HEK293 (cell line): ENCODE measurements at regions of chr15 and their contacts with region 1.

Region 1: DNA sequence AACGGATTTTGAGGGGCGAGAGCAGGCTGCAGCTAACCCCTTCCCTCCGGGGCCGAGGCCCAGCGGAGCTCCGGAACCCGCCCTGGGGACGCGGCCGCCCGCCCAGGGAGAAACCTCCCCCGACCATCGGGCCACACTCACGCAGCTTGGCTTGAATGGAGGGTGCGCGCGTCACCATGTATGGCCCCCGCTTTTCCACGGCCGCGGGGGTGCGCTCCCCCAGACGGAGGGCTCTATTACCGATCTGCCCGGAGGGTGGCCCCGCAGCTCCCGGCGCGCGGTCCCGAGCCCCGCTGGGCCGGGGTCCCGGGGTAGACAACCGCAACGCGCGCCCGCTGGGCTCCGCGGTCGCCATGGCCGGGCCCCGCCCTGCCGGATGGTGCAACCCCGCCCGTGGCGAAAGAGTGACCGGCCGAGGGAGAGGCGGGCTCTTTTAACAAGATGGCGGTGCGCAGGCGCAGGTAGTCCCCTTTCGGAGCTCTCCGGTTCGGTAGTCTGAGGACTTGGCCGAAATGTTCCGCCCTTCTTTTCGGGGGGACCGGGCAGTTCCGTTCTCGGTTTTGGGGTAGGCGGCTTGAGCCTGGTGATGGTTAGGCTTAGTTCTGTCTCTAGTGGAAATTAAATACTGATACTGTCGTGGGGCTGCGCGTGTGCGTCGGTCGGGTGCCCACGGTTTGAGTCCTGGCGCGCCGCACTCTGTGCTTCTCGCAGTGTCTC is at the start of gene FAM219B:
- H3K4me3 ChIP-seq: peak within 1 kb of the TSS; percentile 82
- H3K27ac ChIP-seq: peak within 1 kb of the TSS; percentile 89
- H3K4me1 ChIP-seq: peaks cover 3% of the 10 kb centered on the region; the same call in 1 of the 2 replicates
- CTCF ChIP-seq: peak; percentile 60

Region 2: DNA sequence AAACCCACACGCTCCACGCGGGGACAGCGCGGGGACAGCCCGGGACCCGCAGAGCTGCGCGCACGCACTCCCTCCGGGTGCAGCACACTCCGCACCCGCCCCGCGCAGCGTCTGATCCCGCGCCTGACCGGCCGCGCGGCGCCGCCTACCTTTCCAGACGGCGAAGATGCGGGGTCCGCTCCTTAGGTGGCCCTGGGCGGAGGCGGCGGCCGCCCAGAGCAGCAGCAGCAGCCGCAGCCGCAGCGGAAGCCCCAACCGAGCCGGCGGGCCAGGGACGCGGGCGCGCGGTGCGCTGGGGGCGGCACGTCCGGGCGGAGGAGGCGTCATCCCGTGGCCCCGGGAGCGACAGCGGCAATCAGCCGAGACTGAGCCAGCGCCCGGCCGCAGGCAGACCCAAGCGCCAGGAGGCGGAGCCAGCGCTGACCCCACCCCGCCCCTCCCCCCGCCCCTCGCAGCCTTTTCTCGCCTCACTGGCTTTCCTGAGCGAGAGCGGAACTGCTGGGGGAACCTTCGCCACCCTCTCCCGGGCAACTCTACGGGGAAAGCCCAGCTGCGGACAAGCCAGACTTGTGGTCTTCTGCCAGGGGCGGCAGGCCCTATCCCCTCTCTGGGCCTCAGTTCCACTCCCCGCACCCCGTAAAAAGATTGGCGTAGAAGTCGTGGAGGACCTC is 472.9 kb before region 1 on chr15 and contains the start of gene SEMA7A:
- CTCF ChIA-PET with region 1: no interaction called
- POLR2A ChIA-PET with region 1: no interaction called
- H3K4me3 ChIP-seq: peak within 1 kb of the TSS; percentile 57
- H3K27ac ChIP-seq: no peak within 1 kb of the TSS
- H3K4me1 ChIP-seq: peaks cover 4% of the 10 kb centered on the region
- CTCF ChIP-seq: no peak; the same call in 1 of the 2 replicates

Region 3: DNA sequence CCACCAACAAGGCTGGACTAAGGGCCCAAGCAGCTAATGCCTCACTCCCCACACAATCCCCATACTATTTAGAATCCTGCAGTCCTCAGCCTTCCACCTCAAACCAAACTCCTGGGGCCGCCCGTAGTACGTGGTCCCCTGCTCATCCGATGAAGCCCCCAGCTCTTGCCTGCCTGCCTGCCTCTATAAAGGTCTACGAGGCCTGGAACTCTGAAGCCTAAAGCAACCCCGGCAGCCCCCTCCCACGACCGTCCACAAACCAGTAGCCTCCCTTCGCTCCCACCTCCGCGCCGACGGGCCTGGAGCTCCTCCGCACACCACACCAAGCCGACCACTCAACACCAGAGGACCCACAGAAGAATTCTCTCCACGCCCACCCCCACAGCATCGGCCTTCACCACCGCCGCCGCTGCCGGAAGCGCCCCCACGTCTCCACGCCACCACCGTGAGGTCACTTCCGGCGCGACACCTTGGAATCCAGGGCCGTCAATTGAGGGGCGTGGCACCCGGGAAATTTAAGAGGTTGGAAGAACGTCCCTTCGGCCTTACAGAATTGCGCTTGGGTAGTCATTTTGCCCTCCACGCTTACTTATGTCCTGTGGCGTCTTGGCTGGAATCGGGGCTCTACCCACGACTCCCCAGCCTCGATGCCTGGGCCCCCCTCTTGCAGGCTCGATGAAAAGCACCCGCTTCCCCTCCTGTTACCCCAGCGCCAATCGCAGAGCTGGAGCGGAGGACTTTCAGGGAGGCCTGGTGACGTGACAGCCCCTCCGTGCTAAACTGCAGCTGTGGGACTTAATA is 210.8 kb before region 1 on chr15 and contains the start of gene EDC3:
- CTCF ChIA-PET with region 1: no interaction called
- POLR2A ChIA-PET with region 1: no interaction called
- H3K4me3 ChIP-seq: peak within 1 kb of the TSS; percentile 85
- H3K27ac ChIP-seq: peak within 1 kb of the TSS; percentile 76
- H3K4me1 ChIP-seq: peaks cover 5% of the 10 kb centered on the region; the same call in 1 of the 2 replicates
- CTCF ChIP-seq: no peak; the same call in 1 of the 2 replicates

Region 4: GRCh38 chr15:74752491-74753020 is 154.0 kb before region 1 on chr15:
- CTCF ChIA-PET with region 1: no interaction called
- POLR2A ChIA-PET with region 1: no interaction called
- H3K4me3 ChIP-seq: no peak overlapping the region
- H3K27ac ChIP-seq: no peak overlapping the region
- H3K4me1 ChIP-seq: no peaks in the 10 kb centered on the region
- CTCF ChIP-seq: no peak

Region 5: GRCh38 chr15:74781431-74782258 is 125.0 kb before region 1 on chr15 and contains the start of gene CSK:
- CTCF ChIA-PET with region 1: interaction called, 13 read pairs
- POLR2A ChIA-PET with region 1: interaction called, 4 read pairs
- H3K4me3 ChIP-seq: peak within 1 kb of the TSS; percentile 60
- H3K27ac ChIP-seq: peak within 1 kb of the TSS; percentile 95
- H3K4me1 ChIP-seq: peaks cover 27% of the 10 kb centered on the region
- CTCF ChIP-seq: no peak

Region 6: DNA sequence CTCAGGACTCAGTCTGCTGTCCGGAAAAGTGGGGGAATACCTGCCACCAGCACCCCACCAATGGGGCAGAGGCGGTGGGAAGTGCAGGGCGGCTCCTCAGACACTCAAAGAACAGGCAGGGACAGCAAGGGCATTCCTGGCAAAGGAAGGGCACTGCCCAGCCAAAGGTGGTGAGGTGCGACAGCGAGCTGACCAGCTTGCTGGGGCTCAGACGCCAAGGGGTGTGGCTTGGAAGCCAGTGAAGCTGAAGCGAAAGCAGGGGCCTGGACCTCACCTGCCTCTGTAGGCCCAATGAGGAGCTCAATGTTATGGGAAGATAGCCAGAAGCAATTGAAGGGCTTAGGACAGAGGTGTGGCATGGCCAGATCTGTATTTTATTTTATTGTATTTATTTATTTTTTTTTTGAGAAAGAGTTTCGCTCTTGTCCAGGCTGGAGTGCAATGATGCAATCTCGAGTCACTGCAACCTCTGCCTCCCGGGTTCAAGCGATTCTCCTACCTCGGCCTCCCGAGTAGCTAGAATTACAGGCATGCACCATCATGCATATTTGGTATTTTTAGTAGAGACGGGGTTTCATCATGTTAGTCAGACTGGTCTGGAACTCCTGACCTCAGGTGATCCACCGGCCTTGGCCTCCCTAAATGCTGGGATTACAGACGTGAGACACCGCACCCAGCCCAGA is 98.4 kb before region 1 on chr15:
- CTCF ChIA-PET with region 1: interaction called, 11 read pairs
- POLR2A ChIA-PET with region 1: no interaction called
- H3K4me3 ChIP-seq: no peak overlapping the region
- H3K27ac ChIP-seq: no peak overlapping the region
- H3K4me1 ChIP-seq: no peaks in the 10 kb centered on the region
- CTCF ChIP-seq: no peak

Region 7: DNA sequence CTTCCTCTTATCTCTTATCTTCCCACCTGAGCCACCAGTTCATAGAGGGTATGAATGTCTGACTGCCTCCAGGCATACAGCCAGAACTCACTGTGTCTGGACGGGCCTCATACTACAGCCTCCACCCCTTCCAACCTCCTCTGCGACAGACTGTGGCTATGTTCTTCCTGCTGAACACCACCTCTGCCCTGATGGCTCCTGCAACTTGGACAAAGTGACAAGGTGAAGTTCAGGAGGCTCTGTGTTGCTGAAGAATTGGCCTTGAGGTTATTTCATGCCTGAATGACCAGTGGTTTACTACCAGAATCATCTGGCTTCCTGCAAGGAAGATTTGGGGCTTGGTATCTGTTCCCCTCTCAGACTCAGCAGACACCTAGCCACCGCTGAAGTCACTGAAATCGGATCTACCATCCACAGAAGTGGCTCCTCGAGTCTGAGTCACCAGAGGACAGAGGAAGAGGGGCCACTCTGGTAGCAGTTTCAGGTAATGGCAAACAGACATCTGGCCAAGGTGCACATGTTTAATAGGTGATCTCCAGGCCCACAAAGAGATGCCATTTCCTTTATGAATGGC is 49.4 kb before region 1 on chr15:
- CTCF ChIA-PET with region 1: interaction called, 10 read pairs
- POLR2A ChIA-PET with region 1: interaction called, 5 read pairs
- H3K4me3 ChIP-seq: no peak overlapping the region
- H3K27ac ChIP-seq: peak overlapping the region; percentile 42
- H3K4me1 ChIP-seq: peaks cover 14% of the 10 kb centered on the region
- CTCF ChIP-seq: no peak

Region 8: DNA sequence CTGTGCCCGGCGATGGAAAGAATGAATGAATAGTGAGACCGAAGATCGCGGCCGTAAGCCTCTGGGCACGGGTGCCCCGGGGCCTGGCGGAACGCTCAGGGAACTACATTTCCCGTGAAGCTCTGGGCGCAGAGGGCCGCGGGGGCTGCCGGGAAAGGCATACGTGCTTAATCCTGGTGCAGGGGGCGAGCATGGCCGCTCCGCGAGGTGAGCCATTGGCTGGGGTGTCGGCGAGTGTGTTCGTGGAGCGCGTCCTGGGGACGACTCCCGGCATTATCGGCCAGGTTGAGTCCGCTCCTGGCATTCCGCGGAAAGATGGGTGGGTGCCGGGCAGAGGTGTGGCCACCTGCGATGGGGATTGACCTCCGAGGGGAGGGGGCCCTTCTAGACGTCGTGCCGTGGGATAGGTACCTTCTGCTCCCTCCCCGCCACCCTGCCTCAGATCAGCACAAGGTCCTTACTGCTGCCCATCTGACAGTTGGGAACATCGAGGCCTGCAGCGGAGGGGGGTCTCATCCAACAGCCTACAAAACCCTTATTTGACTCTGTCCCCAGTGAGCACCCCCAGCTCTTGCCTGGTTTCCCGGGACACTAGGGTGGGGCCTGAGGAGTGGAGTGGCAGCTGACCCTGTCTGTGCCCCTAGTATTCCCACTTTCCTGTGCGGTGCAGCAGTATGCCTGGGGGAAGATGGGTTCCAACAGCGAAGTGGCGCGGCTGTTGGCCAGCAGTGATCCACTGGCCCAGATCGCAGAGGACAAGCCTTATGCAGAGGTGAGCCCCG is 16.5 kb before region 1 on chr15 and contains the start of gene MPI:
- CTCF ChIA-PET with region 1: interaction called, 57 read pairs
- POLR2A ChIA-PET with region 1: interaction called, 25 read pairs
- H3K4me3 ChIP-seq: peak within 1 kb of the TSS; percentile 75
- H3K27ac ChIP-seq: peak within 1 kb of the TSS; percentile 66
- H3K4me1 ChIP-seq: peaks cover 4% of the 10 kb centered on the region; the same call in 1 of the 2 replicates
- CTCF ChIP-seq: peak; percentile 52

Region 9: DNA sequence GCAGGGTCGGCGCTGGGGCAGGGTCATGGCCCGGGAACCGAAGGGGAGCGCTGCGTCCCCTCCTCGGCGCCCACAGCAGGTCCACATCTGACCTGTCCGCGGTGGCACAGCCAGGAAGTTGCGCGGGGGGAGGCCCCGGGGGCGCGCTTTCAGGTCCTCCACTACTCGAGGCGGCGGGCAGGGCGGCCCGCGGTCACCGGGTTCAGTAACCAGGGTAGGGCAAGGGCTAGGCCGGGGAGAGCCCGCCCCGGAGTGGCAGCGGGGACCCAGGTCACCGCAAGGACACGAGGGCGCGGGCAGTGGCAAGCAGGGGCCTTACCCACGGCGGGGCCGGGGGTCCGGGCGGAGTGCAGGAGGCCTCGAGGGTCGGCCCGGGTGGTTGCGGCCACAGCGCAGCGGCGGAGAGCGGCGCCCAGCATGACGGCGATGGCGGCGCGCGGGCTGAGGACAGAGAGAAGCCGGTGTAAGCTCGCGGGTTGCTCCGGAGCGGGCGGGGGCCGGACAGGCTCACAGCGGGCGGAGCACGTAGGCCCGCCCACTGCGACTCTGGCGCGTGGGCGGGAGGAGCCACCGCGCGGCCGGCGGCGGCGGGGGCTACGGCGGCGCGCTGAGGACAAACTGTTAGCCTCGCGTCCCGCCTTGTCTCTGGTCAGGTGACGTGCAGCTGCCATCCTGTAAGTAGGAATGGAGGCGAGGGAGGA is 31.1 kb after region 1 on chr15 and contains the start of gene COX5A:
- CTCF ChIA-PET with region 1: interaction called, 6 read pairs
- POLR2A ChIA-PET with region 1: interaction called, 25 read pairs
- H3K4me3 ChIP-seq: peak within 1 kb of the TSS; percentile 87
- H3K27ac ChIP-seq: peak within 1 kb of the TSS; percentile 94
- H3K4me1 ChIP-seq: peaks cover 7% of the 10 kb centered on the region
- CTCF ChIP-seq: peak; percentile 87

Region 10: DNA sequence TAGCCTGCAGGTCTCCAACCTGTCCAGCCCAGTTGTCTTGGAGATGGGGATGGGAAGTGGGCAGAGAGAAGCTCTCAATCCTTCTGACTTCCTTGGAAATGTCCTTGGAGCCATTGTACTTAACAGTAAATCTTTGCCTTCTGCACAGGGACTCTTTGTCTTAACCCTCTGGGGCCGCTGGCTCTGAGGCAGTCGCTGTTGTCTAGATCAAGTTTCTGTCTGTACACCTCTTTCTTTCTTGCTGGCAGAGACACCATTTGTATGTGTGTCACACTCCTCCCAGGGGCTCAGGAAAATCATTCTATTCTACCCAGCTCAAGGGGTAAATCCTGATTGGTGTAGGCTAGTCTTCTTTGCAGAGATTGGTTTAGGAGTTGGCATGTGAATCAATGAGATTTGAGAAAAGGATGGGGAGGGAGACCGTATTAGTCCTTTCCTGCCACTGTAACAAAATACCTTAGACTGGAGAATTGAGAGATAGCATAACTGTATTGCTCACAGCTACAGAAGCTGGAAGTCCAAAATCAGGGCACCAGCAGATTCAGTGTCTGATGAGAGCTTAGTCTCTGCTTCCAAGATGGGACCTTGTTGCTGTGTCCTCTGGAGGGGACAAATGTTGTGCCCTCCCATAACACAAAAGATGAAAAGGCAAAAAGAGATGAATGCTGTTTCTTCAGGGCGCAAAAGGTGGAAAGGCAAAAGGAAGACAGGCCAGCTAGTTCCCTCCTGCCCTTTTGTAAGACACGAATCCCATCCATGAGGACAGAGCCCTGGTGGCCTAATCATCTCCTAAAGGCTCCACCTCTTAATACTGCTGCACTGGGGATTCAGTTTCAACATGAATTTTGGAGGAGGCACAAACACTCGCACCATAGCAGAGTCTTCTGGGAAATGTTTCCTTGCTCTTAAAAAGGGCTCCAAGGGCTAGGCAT is 183.1 kb after region 1 on chr15:
- CTCF ChIA-PET with region 1: no interaction called
- POLR2A ChIA-PET with region 1: no interaction called
- H3K4me3 ChIP-seq: no peak overlapping the region
- H3K27ac ChIP-seq: no peak overlapping the region
- H3K4me1 ChIP-seq: no peaks in the 10 kb centered on the region
- CTCF ChIP-seq: no peak